ENCODE measurements at regions of chr2 and their contacts with region 1.

Region 1: DNA sequence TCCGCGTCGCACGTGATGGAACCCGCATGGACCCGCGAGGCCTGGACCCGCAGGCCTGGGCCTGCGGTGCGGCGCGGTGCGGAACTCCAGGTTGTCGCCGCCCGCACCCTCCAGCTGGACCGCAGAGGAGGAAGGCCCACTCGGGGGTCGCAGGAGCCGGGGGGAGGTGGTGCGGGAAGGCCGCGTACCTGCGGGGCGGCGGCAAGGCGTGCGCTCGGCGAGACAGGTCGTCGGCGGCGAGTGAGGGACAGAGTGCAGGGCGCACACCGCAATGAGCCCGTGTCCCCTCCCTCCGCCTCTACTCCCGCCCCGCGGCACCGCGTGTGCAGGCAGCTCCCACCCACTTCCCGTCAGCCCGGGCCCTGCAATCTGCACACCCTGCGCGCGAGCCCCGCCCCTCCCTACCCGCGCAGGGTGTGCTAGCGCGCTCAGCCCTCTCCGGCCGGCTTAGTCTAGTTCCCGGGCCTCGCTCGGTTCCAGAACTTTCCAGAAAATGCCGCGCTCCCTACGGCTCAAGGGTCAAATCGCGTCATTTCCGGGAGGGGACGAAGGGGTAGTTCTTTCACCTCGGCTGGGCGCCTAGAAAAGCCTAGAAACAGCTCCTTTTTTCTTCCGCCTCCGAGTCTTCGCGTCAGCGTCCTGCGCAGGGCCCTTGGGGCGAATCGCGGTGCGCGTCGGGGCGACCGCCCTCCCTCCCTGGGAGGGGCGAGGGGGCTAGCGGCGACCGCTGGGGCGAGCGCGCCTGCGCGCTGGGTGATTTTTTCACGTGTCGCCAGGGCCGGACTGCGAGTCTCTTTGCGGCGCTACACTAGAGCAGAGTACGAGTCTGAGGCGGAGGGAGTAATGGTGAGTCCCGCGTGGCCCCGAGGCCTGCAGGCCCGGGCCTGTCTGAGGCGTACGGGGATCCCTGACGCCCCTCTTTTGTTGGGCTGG is at the starts of genes HSPD1 and HSPE1:
- DNase-seq: peak; percentile 96
- ATAC-seq: peak; percentile 84
- H3K4me3 Mint-ChIP-seq: peak within 1 kb of the TSS; percentile 91
- H3K27ac Mint-ChIP-seq: peak within 1 kb of the TSS; percentile 97
- H3K4me1 Mint-ChIP-seq: peaks cover 41% of the 10 kb centered on the region
- H3K27me3 Mint-ChIP-seq: no peaks in the 10 kb centered on the region
- total RNA-seq, gene HSPD1: 190 to 195 TPM
- total RNA-seq, gene HSPE1: 92.1 to 94.3 TPM

Region 2: GRCh38 chr2:197434541-197435513 is 65.0 kb before region 1 on chr2 and contains the start of gene SF3B1:
- POLR2A ChIA-PET with region 1: interaction called, 47 read pairs
- DNase-seq: peak; percentile 99
- ATAC-seq: peak; percentile 95
- H3K4me3 Mint-ChIP-seq: peak within 1 kb of the TSS; percentile 85
- H3K27ac Mint-ChIP-seq: peak within 1 kb of the TSS; percentile 100
- H3K4me1 Mint-ChIP-seq: peaks cover 38% of the 10 kb centered on the region
- H3K27me3 Mint-ChIP-seq: no peaks in the 10 kb centered on the region
- total RNA-seq, gene SF3B1: 388 to 392 TPM

Region 3: DNA sequence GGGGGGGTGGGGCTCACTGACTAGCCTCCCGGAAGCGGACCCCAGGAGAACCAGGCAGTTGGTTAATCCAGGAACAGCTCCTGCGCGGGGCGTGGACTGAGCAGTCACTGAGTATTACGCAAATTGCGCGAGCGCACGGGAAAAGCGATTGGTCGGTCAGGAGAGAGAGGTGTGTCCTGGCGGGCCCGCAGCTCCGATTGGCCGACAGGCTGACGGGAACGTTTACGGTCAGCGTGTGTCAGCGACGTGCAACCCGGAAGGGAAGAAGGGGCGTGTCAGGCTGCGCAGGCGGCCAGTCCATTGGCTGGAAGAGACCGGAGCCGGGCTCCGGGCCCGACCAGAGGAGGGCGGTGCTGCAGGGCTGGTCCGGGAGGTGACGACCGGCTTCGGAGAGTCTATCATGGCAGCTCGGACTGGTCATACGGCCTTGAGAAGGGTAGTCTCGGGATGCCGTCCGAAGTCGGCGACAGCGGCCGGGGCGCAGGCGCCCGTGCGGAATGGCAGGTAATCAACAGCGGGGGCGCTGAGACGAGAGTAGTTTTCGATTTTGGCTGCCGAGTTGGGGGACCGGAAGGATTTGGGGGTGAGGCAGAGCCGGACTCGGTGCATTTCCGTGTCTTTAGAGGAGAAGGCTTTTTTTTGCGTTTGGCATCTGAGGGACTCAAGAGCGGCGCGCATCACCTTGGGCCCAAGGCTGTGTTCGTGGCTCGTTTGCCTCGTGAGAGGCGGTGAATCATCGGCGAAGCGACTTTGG is 46.5 kb before region 1 on chr2 and contains the start of gene COQ10B:
- POLR2A ChIA-PET with region 1: interaction called, 32 read pairs
- DNase-seq: peak; percentile 94
- ATAC-seq: peak; percentile 93
- H3K4me3 Mint-ChIP-seq: peak within 1 kb of the TSS; percentile 88
- H3K27ac Mint-ChIP-seq: peak within 1 kb of the TSS; percentile 96
- H3K4me1 Mint-ChIP-seq: peaks cover 24% of the 10 kb centered on the region
- H3K27me3 Mint-ChIP-seq: no peaks in the 10 kb centered on the region
- total RNA-seq, gene COQ10B: 24.8 to 25.2 TPM

Region 4: DNA sequence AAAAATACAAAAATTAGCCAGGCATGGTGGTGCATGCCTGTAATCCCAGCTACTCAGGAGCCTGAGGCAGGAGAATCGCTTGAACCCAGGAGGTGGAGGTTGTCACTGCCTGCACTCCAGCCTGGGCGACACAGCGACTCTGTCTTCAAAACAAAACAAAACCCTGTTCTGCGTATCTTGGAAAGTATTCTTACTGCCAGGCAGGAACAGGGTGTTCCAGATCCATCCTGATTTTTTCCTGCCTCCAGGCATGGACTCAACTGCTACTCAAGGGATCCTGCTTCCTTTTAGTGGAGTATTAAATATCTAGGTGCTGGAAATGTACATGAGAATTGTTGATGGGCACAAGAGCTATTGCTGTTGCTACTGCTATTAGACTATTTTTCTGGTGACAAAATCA is 12.5 kb before region 1 on chr2:
- POLR2A ChIA-PET with region 1: interaction called, 11 read pairs
- DNase-seq: no peak
- ATAC-seq: no peak
- H3K4me3 Mint-ChIP-seq: no peak overlapping the region
- H3K27ac Mint-ChIP-seq: no peak overlapping the region
- H3K4me1 Mint-ChIP-seq: peaks cover 2% of the 10 kb centered on the region
- H3K27me3 Mint-ChIP-seq: no peaks in the 10 kb centered on the region

Region 5: GRCh38 chr2:197515739-197516392 is 16.0 kb after region 1 on chr2 and contains the start of gene MOB4:
- POLR2A ChIA-PET with region 1: interaction called, 121 read pairs
- DNase-seq: peak; percentile 98
- ATAC-seq: peak; percentile 94
- H3K4me3 Mint-ChIP-seq: peak within 1 kb of the TSS; percentile 91
- H3K27ac Mint-ChIP-seq: peak within 1 kb of the TSS; percentile 85
- H3K4me1 Mint-ChIP-seq: peaks cover 18% of the 10 kb centered on the region
- H3K27me3 Mint-ChIP-seq: no peaks in the 10 kb centered on the region
- total RNA-seq, gene MOB4: 17.2 to 18.1 TPM

Region 6: GRCh38 chr2:197705121-197705911 is 205.5 kb after region 1 on chr2 and contains the start of gene MARS2:
- POLR2A ChIA-PET with region 1: interaction called, 18 read pairs
- DNase-seq: peak; percentile 95
- ATAC-seq: peak; percentile 86
- H3K4me3 Mint-ChIP-seq: peak within 1 kb of the TSS; percentile 89
- H3K27ac Mint-ChIP-seq: peak within 1 kb of the TSS; percentile 94
- H3K4me1 Mint-ChIP-seq: peaks cover 37% of the 10 kb centered on the region
- H3K27me3 Mint-ChIP-seq: no peaks in the 10 kb centered on the region
- total RNA-seq, gene MARS2: 13.7 to 16.0 TPM

Measured in activated naive CD8-positive, alpha-beta T cell treated with anti-CD3 and anti-CD28 coated beads, Interleukin-2, amount 10 ng/mL, durations not matched to agents 7 days and 5 days (primary cell).